Activated naive CD4-positive, alpha-beta T cell treated with anti-CD3 and anti-CD28 coated beads, Interleukin-2, amount 10 ng/mL, durations not matched to agents 7 days and 5 days (primary cell): ENCODE measurements at regions of chr7 and their contacts with region 1.

Region 1: DNA sequence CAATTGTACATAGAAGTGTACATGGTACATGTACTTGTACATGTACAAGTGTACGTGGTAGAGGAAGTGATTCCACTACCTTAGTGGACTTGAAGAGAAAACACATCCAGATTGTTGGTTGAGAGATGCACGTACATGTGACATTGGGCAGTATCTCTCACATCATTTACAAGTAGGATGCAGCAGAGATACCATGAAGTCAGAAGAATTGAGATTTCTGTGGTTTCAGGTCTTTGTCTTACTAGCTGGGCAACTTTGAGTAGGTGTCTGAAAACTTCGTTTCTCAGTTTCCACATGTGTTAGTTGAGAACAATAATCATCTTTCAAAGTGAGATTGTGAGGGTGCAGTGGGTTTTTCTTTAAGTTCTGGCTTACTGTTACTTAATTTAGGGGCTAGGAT is 21.5 kb downstream of the CLDN12 start:
- DNase-seq: no peak
- H3K4me3 Mint-ChIP-seq: no peak overlapping the region
- H3K27ac Mint-ChIP-seq: peak overlapping the region; percentile 0
- H3K4me1 Mint-ChIP-seq: peaks cover 14% of the 10 kb centered on the region
- H3K27me3 Mint-ChIP-seq: no peaks in the 10 kb centered on the region

Region 2: DNA sequence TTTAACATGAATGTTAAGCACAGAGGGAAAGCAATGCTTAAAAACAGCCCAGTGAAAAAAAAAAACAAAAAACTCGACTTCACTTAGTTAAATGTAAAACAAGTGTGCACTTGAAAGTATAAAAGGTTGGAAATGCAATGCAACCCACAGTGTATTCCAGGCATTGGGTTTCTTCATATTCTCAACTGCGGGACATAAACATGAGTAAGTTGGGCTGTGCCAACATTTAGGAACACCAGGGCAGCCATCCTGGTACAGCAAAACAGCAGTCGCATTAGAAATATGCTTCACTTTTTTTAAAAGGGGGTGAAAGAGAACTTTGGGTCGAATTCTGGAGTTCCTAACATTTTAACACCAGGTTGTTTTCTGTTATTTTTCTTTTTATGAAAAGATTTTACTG is 269.5 kb before region 1 on chr7:
- CTCF ChIA-PET with region 1: interaction called, 46 read pairs
- DNase-seq: no peak
- H3K4me3 Mint-ChIP-seq: no peak overlapping the region
- H3K27ac Mint-ChIP-seq: no peak overlapping the region
- H3K4me1 Mint-ChIP-seq: peaks cover 4% of the 10 kb centered on the region
- H3K27me3 Mint-ChIP-seq: peaks cover 22% of the 10 kb centered on the region

Region 3: DNA sequence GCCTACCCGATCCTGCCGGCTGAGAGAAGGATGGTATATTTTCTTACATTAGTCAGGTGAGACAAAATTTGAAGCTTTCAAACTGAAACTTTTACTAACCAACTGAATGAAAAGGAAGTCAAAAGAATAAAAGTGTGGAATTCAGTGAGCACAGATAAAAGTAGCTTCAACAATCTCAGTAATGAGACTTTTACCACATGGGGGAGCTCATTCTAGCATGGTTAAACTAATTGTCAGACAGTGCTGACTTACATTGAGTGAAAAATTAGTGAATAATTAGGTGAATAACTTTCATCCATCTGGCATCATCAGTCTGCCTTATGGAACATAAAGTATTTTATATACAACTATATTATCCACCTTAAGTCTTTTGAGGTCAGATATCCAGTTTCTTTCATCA is 112.0 kb before region 1 on chr7:
- CTCF ChIA-PET with region 1: interaction called, 36 read pairs
- DNase-seq: no peak
- H3K4me3 Mint-ChIP-seq: no peak overlapping the region
- H3K27ac Mint-ChIP-seq: no peak overlapping the region
- H3K4me1 Mint-ChIP-seq: no peaks in the 10 kb centered on the region
- H3K27me3 Mint-ChIP-seq: peaks cover 8% of the 10 kb centered on the region

Region 4: DNA sequence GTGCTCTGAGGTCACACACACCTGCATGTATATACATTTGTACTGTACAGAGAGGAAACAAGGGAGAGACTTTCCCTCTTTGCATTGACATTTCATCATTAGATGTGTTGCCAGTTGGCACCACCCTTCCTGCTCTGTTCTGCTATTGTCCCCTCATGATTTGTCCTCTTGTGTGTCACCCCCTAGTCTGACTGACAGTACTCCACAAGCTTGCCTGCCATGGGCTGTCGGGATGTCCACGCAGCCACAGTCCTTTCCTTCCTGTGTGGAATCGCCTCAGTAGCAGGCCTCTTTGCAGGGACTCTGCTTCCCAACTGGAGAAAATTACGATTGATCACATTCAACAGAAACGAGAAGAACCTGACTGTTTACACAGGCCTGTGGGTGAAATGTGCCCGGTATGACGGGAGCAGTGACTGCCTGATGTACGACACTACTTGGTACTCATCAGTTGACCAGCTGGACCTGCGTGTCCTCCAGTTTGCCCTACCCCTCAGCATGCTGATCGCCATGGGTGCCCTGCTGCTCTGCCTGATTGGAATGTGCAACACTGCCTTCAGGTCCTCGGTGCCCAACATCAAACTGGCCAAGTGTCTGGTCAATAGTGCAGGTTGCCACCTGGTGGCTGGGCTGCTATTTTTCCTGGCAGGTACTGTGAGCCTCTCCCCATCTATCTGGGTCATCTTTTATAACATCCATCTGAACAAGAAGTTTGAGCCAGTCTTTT is 12.1 kb before region 1 on chr7:
- CTCF ChIA-PET with region 1: interaction called, 11 read pairs
- DNase-seq: peak; percentile 40
- H3K4me3 Mint-ChIP-seq: no peak overlapping the region
- H3K27ac Mint-ChIP-seq: no peak overlapping the region
- H3K4me1 Mint-ChIP-seq: no peaks in the 10 kb centered on the region
- H3K27me3 Mint-ChIP-seq: no peaks in the 10 kb centered on the region